ENCODE measurements at regions of chr20 and their contacts with region 1.

Region 1: GRCh38 chr20:63973636-63974402 is 4.1 kb upstream of the ZNF512B start:
- DNase-seq: peak; percentile 98
- H3K4me3 Mint-ChIP-seq: peak overlapping the region; percentile 39
- H3K27ac Mint-ChIP-seq: peak overlapping the region; percentile 0
- H3K4me1 Mint-ChIP-seq: peaks cover 44% of the 10 kb centered on the region
- H3K27me3 Mint-ChIP-seq: no peaks in the 10 kb centered on the region
- CTCF ChIP-seq: peak; percentile 99

Region 2: GRCh38 chr20:63253438-63254236 is 720.2 kb before region 1 on chr20:
- CTCF ChIA-PET with region 1: interaction called, 12 read pairs
- intact Hi-C with region 1: no loop called
- DNase-seq: no peak
- H3K4me3 Mint-ChIP-seq: no peak overlapping the region
- H3K27ac Mint-ChIP-seq: no peak overlapping the region
- H3K4me1 Mint-ChIP-seq: no peaks in the 10 kb centered on the region
- H3K27me3 Mint-ChIP-seq: peaks cover 94% of the 10 kb centered on the region
- CTCF ChIP-seq: no peak